ENCODE measurements at regions of chr10 and their contacts with region 1.

Region 1: DNA sequence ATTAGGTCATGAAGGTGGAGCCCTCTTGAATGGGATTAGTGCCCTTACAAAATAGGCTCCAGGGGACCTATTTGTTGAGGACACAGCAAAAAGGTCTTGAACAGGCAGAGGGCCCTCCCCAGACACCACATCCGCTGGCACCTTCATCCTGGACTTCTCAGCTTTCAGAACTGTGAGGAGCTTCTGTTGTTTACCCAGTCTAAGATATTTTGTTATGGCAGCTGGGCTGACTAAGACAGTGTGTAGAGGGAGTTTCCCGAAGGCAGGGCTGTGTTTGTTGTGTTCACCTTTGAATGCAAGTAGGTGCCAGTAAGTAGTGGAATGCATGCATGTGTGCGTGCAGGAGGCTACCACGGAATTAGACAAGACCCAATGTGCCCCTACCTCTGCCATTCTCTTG is 106.7 kb downstream of the PTPRE start:
- DNase-seq: no peak
- H3K4me3 ChIP-seq: no peak overlapping the region
- CTCF ChIP-seq: no peak
- POLR2A ChIP-seq: no peak

Region 2: GRCh38 chr10:127906548-127907377 is 106.9 kb before region 1 on chr10 and contains the start of gene PTPRE:
- intact Hi-C with region 1: loop called (anchors 2 kb)
- DNase-seq: peak in 1 of 2 donors; percentile 90
- H3K4me3 ChIP-seq: peak within 1 kb of the TSS; percentile 38
- CTCF ChIP-seq: no peak
- POLR2A ChIP-seq: no peak
- total RNA-seq, gene PTPRE: 17.4 to 23.0 (median 20.1) TPM